ENCODE measurements at regions of chr11 and their contacts with region 1.

Region 1: DNA sequence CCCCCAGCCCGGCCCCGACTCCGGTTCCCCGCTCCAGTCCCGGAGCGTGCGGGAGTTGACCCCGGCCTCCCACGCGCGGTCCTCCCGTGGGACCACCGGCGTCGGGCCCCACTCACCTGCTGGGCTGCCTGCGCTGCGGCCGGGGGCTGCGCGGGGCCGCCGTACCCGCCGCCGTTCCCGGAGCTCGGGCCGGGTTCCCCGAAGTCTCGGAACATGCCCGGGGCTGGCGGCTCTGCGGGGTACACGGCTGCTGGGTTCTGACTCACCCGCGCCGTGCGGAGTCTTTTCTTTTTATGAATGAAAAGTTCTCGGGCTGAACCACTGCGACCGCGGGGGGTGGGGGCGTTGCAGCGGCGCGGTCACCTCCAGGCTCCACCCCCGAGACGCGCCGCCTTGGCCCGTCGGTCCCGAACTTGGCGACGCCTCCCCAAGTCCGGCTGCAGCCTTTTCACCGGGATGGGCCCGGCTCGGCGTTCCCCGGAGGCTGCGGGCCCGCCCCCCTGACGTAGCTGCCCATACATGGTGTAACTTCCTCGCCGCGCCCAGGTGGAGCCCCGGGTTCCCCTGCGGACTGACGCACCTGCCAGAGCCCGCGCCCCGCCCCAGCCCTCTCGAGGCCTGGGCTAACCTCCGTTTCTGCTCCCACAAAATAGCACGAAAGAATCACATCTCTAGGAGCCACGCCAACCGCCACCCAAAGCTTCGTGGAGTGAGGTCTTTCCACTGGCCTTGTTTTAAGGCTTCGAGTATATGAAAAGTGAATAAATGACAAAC is at the start of gene FOSL1:
- DNase-seq: peak; percentile 98
- ATAC-seq: peak; percentile 85
- H3K4me3 Mint-ChIP-seq: peak within 1 kb of the TSS; percentile 75
- H3K27ac Mint-ChIP-seq: peak within 1 kb of the TSS; percentile 78
- H3K4me1 Mint-ChIP-seq: peaks cover 35% of the 10 kb centered on the region
- H3K27me3 Mint-ChIP-seq: peaks cover 4% of the 10 kb centered on the region
- total RNA-seq, gene FOSL1: 11.1 to 11.3 TPM

Region 2: DNA sequence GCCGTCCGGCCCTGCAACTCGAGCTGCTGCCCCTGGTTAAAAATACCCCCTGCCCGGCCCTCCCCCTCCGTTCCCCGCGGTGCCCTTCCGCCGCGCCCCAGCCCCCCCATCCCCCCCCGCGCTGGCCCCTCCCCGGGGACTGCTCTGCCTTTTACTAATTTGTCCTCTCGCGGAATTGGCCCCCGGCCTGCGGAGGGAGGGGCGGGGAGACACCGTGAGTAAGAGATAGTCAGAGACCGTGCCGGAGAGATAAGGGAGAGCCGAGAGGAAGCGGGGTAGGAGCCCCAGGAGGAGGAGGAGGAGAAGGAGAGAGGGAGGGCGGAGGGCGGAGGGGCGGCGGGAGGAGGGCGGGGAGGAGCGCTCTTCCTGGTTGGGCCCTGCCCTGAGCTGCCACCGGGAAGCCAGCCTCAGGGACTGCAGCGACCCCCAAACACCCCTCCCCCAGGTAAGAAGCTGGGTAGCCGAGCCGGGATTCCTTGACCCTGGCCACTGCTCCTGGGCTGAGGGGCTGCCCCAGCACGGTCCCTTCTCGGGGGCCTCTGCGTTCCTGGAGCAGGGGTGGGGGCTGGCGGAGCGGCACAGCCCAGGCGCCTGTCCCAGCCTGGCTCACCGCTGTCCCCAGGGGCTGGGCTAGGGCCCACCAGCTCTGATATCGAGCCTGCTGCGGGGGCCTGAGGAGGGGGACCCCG is 718.6 kb before region 1 on chr11 and contains the start of gene CAPN1:
- CTCF ChIA-PET with region 1: no interaction called
- POLR2A ChIA-PET with region 1: no interaction called
- intact Hi-C with region 1: no loop called
- DNase-seq: peak; percentile 88
- ATAC-seq: peak; percentile 89
- H3K4me3 Mint-ChIP-seq: peak within 1 kb of the TSS; percentile 85
- H3K27ac Mint-ChIP-seq: peak within 1 kb of the TSS; percentile 82
- H3K4me1 Mint-ChIP-seq: peaks cover 14% of the 10 kb centered on the region
- H3K27me3 Mint-ChIP-seq: no peaks in the 10 kb centered on the region
- total RNA-seq, gene CAPN1: 103 to 125 TPM

Region 3: DNA sequence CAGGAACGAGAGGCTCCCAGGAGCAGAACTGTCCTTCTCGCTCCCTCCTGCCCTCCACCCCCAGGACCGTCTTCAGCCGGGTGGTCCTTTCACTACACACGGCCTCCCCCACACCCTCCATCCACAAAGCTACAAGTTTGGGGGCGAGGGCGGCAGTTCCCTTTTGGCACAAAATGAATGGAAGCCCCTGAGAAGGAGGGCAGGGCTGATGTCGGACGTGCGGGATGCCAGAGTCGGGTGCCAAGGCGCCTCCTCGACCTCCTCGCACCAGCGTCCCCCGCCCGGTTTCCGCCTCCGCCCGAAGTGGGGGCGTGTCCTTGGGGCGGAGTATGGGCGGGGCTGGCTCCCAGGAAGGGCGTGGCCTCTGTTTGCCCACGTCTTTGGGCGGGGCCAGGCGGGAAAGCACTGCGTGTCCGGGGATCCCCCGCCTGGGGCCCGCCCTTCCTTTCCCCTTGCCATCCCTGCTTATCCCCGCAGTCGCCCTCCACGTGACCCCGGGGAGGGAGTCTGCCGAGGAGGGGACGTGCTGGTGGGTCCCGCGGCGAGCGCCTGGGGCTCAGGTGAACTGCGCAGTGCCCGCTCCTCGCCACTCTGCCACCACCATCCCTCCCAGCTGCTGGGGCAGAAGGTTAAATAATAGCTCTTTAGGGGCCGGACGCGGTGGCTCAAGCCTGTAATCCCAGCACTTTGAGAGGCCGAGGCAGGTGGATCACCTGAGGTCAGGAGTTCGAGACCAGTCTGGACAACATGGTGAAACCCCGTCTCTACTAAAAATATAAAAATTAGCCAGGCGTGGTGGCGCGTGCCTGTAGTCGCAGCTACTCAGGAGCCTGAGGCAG is 26.8 kb before region 1 on chr11:
- CTCF ChIA-PET with region 1: interaction called, 3 read pairs
- POLR2A ChIA-PET with region 1: no interaction called
- intact Hi-C with region 1: loop called (anchors 1 kb)
- DNase-seq: peak; percentile 97
- ATAC-seq: peak; percentile 93
- H3K4me3 Mint-ChIP-seq: peak overlapping the region; percentile 84
- H3K27ac Mint-ChIP-seq: peak overlapping the region; percentile 91
- H3K4me1 Mint-ChIP-seq: peaks cover 15% of the 10 kb centered on the region
- H3K27me3 Mint-ChIP-seq: no peaks in the 10 kb centered on the region